ENCODE measurements at regions of chr22 and their contacts with region 1.

Region 1: GRCh38 chr22:36481393-36482168 is at the start of gene TXN2:
- DNase-seq: peak; percentile 97 to 99
- ATAC-seq: peak; percentile 82 to 92 (median 82)
- H3K4me3 ChIP-seq: peak within 1 kb of the TSS; percentile 59
- H3K4me3 Mint-ChIP-seq: peak within 1 kb of the TSS; percentile 94
- H3K27ac ChIP-seq: peak within 1 kb of the TSS; percentile 96
- H3K27ac Mint-ChIP-seq: peak within 1 kb of the TSS; percentile 94 to 99
- H3K4me1 ChIP-seq: peaks cover 18% of the 10 kb centered on the region
- H3K4me1 Mint-ChIP-seq: peaks cover 14 to 20% of the 10 kb centered on the region in 2 donors
- H3K27me3 ChIP-seq: no peaks in the 10 kb centered on the region
- H3K27me3 Mint-ChIP-seq: no peaks in the 10 kb centered on the region
- CTCF ChIP-seq: no peak
- total RNA-seq, gene TXN2: 35.5 to 45.4 (median 41.5) TPM

Region 2: DNA sequence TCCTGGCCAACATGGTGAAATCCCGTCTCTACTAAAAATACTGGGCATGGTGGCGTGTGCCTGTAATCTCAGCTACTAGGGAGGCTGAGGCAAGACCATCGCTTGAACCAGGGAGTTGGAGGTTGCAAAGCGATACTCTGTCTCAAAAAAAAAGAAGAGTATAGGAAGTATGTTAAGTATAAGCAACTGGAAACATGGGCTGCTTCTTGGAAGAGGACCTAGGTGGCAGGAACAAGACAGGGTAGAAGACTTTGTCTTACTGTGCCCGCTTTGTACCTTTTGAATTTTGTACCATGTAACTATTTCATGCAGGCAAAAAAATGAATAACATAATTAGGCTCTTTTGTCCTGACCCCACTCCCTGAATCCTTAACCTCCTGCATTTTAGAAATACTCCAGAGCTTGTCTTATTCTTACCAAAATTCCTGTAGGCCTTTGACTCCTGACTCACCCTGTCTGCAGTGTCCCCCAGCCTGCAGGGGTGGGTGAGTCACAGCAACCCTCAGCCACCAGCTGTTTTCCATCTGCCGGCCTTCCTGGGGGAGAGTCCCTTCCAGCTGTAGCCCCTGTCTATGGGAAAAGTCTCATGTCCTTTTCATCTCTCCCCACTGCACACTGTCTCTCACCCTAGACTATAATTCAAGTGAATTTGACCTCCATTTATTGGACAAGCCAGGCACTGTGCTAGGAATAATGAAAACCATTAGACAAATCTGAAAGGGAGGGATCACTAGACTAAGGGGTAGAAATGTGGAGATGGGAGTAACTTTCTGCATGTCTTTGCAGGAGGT is 41.9 kb before region 1 on chr22:
- intact Hi-C with region 1: loop called (anchors 5 kb)
- DNase-seq: no peak
- ATAC-seq: no peak
- H3K4me3 ChIP-seq: no peak overlapping the region
- H3K4me3 Mint-ChIP-seq: no peak overlapping the region
- H3K27ac ChIP-seq: no peak overlapping the region
- H3K27ac Mint-ChIP-seq: no peak overlapping the region
- H3K4me1 ChIP-seq: peaks cover 27% of the 10 kb centered on the region
- H3K4me1 Mint-ChIP-seq: peaks cover 10 to 14% of the 10 kb centered on the region in 2 donors
- H3K27me3 ChIP-seq: no peaks in the 10 kb centered on the region
- H3K27me3 Mint-ChIP-seq: peaks cover 0 to 4% of the 10 kb centered on the region in 2 donors
- CTCF ChIP-seq: no peak